PC-3 (cell line): ENCODE measurements at regions of chr2 and their contacts with region 1.

Region 1: GRCh38 chr2:197378494-197379307 is 56.1 kb downstream of the SF3B1 start:
- DNase-seq: peak; percentile 63
- ATAC-seq: peak; percentile 87
- H3K4me3 ChIP-seq: peak overlapping the region; percentile 57
- H3K27ac ChIP-seq: no peak overlapping the region
- H3K4me1 ChIP-seq: no peaks in the 10 kb centered on the region
- H3K27me3 ChIP-seq: no peaks in the 10 kb centered on the region
- CTCF ChIP-seq: peak; percentile 93

Region 2: DNA sequence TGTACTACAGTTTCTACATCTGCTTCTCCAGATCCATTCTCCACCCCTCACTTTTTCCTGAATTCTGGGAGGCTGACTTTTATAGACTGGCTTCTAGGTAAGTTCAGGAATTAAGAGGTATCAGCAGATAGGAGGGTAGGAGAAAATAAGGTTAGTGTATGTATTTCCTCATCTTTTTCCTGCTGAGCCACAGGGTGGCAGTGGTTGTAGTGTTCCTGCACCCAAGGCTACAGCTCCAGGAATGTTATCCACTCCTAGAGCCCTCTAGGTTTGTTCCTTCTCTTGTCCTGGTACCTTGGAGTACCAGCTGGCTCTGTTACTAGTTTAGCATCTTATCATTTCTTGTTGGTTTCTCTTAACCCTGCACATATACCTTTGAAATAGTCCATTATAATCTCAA is 528.8 kb before region 1 on chr2:
- CTCF ChIA-PET with region 1: no interaction called
- POLR2A ChIA-PET with region 1: no interaction called
- intact Hi-C with region 1: loop called (anchors 1 kb)
- DNase-seq: peak; percentile 50
- ATAC-seq: peak; percentile 96
- H3K4me3 ChIP-seq: no peak overlapping the region
- H3K27ac ChIP-seq: no peak overlapping the region
- H3K4me1 ChIP-seq: 0 out of 2 replicates have a peak, but pooled peaks cover 3% of the 10 kb centered on the region
- H3K27me3 ChIP-seq: no peaks in the 10 kb centered on the region
- CTCF ChIP-seq: peak; percentile 68

Region 3: DNA sequence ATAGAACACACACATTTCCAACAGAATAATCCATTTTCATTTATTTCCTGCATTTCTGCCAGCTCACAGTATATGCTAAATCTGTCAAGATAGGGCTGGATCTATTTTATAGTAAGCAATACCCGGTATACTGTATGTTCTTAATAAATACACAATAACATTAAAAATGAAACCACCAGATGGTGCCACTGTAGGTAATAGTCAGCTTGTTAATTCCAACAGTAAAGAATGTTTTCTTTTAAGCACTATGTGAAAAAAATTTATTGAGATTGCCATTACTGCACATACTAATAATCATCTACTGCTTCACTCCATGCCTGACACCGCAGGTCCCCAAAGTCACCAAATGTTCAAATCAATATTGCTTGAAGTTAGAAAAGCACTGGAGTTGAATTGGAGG is 320.7 kb before region 1 on chr2:
- CTCF ChIA-PET with region 1: no interaction called
- POLR2A ChIA-PET with region 1: no interaction called
- intact Hi-C with region 1: loop called (anchors 5 kb)
- DNase-seq: peak; percentile 14
- ATAC-seq: peak; percentile 35; the same call in 1 of the 2 replicates
- H3K4me3 ChIP-seq: no peak overlapping the region
- H3K27ac ChIP-seq: no peak overlapping the region
- H3K4me1 ChIP-seq: no peaks in the 10 kb centered on the region
- H3K27me3 ChIP-seq: no peaks in the 10 kb centered on the region
- CTCF ChIP-seq: no peak

Region 4: DNA sequence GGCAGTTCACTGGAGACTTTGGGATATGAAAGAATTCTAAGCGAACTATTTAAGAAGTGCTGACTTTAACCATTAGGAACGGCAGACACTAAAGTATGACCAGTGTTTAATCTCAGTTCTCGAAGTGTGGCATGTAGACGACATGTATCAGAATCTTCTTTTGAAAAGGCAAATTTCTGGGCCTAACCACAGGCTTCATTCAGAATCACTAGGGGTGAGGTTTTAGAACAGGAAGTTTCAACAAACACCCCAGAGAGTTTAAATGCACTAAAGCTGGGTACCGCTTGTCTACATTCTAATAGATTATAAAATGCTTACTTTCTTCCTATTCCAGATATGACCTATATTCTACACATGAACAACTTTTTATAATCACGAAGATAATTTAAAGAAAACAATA is 248.4 kb before region 1 on chr2:
- CTCF ChIA-PET with region 1: interaction called, 10 read pairs
- POLR2A ChIA-PET with region 1: no interaction called
- intact Hi-C with region 1: no loop called
- DNase-seq: no peak
- ATAC-seq: no peak
- H3K4me3 ChIP-seq: no peak overlapping the region
- H3K27ac ChIP-seq: no peak overlapping the region
- H3K4me1 ChIP-seq: no peaks in the 10 kb centered on the region
- H3K27me3 ChIP-seq: no peaks in the 10 kb centered on the region
- CTCF ChIP-seq: no peak

Region 5: GRCh38 chr2:197310271-197310985 is 68.3 kb before region 1 on chr2 and contains the start of gene ANKRD44:
- CTCF ChIA-PET with region 1: interaction called, 3 read pairs
- POLR2A ChIA-PET with region 1: no interaction called
- intact Hi-C with region 1: loop called (anchors 5 kb)
- DNase-seq: peak; percentile 80
- ATAC-seq: peak; percentile 88
- H3K4me3 ChIP-seq: peak within 1 kb of the TSS; percentile 78
- H3K27ac ChIP-seq: no peak within 1 kb of the TSS
- H3K4me1 ChIP-seq: peaks cover 32% of the 10 kb centered on the region
- H3K27me3 ChIP-seq: no peaks in the 10 kb centered on the region
- CTCF ChIP-seq: 0 out of 2 replicates have a peak, but pooled peaks have one; percentile 7
- total RNA-seq, gene ANKRD44: 2.4 and 28.7 TPM in 2 replicates

Region 6: GRCh38 chr2:197547163-197547900 is 168.6 kb after region 1 on chr2:
- CTCF ChIA-PET with region 1: no interaction called
- POLR2A ChIA-PET with region 1: no interaction called
- intact Hi-C with region 1: no loop called
- DNase-seq: peak; percentile 39
- ATAC-seq: peak; percentile 95
- H3K4me3 ChIP-seq: no peak overlapping the region
- H3K27ac ChIP-seq: peak overlapping the region; percentile 57
- H3K4me1 ChIP-seq: 0 out of 2 replicates have a peak, but pooled peaks cover 5% of the 10 kb centered on the region
- H3K27me3 ChIP-seq: no peaks in the 10 kb centered on the region
- CTCF ChIP-seq: no peak